ENCODE measurements at regions of chr6 and their contacts with region 1.

Region 1: DNA sequence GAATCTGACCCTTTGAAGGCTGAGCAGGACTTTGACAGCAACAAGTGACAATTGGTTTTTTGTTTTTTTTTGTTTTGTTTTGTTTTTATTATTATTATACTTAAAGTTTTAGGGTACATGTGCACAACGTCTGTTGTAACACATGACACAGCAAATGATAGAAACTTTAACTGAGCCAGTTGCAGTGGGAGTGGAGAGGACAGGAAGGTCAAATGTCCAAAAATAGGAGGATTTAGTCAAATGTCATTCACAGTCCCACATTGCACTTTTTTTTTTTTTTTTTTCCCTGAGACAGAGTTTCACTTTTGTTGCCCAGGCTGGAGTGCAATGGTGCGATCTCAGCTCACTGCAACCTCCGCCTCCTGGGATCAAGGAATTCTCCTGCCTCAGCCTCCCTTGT is 223.0 kb downstream of the HIVEP2 start:
- DNase-seq: no peak
- ATAC-seq: no peak
- H3K4me3 ChIP-seq: no peak overlapping the region
- H3K4me3 Mint-ChIP-seq: no peak overlapping the region
- H3K27ac ChIP-seq: no peak overlapping the region
- H3K27ac Mint-ChIP-seq: no peak overlapping the region
- H3K4me1 ChIP-seq: peaks cover 6 to 14% of the 10 kb centered on the region in 2 donors
- H3K4me1 Mint-ChIP-seq: peaks cover 12% of the 10 kb centered on the region
- H3K27me3 ChIP-seq: no peaks in the 10 kb centered on the region
- H3K27me3 Mint-ChIP-seq: no peaks in the 10 kb centered on the region
- CTCF ChIP-seq: no peak

Region 2: DNA sequence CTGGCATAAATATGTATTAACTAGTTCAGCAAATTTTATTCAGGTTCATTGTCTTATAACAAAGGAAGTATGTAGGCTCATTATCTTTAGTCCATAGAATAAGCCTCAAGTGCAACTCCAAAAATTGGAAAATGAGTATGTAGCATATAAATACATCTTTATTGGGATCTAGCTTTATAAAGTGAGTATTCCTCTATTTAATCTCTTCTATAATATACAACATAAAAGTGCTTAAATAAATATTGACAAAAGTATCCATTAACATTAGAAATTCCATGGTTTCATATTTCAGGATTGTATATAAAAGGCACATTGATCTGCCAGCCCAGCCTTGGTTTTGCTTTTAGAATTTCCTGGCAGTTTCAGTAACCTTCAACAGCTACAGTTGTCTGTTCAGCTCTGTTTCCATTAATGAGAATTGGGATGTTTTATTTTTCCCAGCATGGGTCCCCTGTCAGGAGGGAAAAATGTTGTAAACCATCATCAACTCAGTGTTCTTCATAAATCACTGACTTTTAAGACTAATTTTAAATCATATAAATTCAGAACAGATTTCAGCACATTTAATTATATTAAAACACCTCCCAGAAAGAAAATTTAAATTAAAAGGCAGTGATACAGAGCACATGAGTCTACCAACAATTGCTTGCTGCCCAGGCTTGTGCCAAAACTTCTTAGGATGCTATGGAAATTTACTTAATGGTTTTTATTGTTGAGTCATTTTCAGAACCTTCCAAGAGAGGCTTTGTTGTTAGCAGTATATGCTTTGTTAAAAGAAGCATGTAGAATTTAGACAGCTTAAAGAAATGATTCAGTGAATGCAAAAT is 300.5 kb before region 1 on chr6:
- CTCF ChIA-PET with region 1: no interaction called
- POLR2A ChIA-PET with region 1: no interaction called
- intact Hi-C with region 1: no loop called
- DNase-seq: no peak
- ATAC-seq: no peak
- H3K4me3 ChIP-seq: no peak overlapping the region
- H3K4me3 Mint-ChIP-seq: no peak overlapping the region
- H3K27ac ChIP-seq: no peak overlapping the region
- H3K27ac Mint-ChIP-seq: no peak overlapping the region
- H3K4me1 ChIP-seq: no peaks in the 10 kb centered on the region
- H3K4me1 Mint-ChIP-seq: no peaks in the 10 kb centered on the region
- H3K27me3 ChIP-seq: no peaks in the 10 kb centered on the region
- H3K27me3 Mint-ChIP-seq: no peaks in the 10 kb centered on the region
- CTCF ChIP-seq: no peak

Region 3: GRCh38 chr6:142732790-142733189 is 10.8 kb after region 1 on chr6:
- CTCF ChIA-PET with region 1: no interaction called
- POLR2A ChIA-PET with region 1: no interaction called
- intact Hi-C with region 1: loop called (anchors 1 kb)
- DNase-seq: no peak
- ATAC-seq: no peak
- H3K4me3 ChIP-seq: no peak overlapping the region
- H3K4me3 Mint-ChIP-seq: no peak overlapping the region
- H3K27ac ChIP-seq: no peak overlapping the region
- H3K27ac Mint-ChIP-seq: no peak overlapping the region
- H3K4me1 ChIP-seq: peaks cover 7 to 15% of the 10 kb centered on the region in 2 donors
- H3K4me1 Mint-ChIP-seq: peaks cover 18% of the 10 kb centered on the region
- H3K27me3 ChIP-seq: no peaks in the 10 kb centered on the region
- H3K27me3 Mint-ChIP-seq: no peaks in the 10 kb centered on the region
- CTCF ChIP-seq: no peak

Measured in B cell (primary cell).